Left cardiac atrium (tissue), 4 donors: ENCODE measurements at regions of chr9 and their contacts with region 1.

Region 1: GRCh38 chr9:105713260-105714019 is 19.1 kb downstream of the TMEM38B start:
- DNase-seq: no peak
- ATAC-seq: no peak

Region 2: GRCh38 chr9:105608721-105609598 is 104.5 kb before region 1 on chr9:
- intact Hi-C with region 1: loop called in 1 of 2 experiments (anchors 2 kb)
- DNase-seq: no peak
- ATAC-seq: no peak

Region 3: GRCh38 chr9:105656131-105656921 is 57.1 kb before region 1 on chr9:
- intact Hi-C with region 1: loop called (anchors 2 to 5 kb)
- DNase-seq: peak; percentile 30
- ATAC-seq: peak; percentile 87 to 91